Activated CD4-positive, alpha-beta T cell treated with anti-CD3 and anti-CD28 coated beads for 36 hours (primary cell): ENCODE measurements at regions of chr5 and their contacts with region 1.

Region 1: GRCh38 chr5:109688971-109689739 is 572 bp upstream of the MAN2A1 start:
- DNase-seq: peak; percentile 87
- ATAC-seq: peak; percentile 82
- H3K4me3 Mint-ChIP-seq: peak overlapping the region; percentile 95
- H3K27ac Mint-ChIP-seq: peak overlapping the region; percentile 92
- H3K4me1 Mint-ChIP-seq: peaks cover 36% of the 10 kb centered on the region
- H3K27me3 Mint-ChIP-seq: no peaks in the 10 kb centered on the region

Region 2: GRCh38 chr5:108381954-108382783 is 1307.0 kb before region 1 on chr5 and contains the start of gene FBXL17:
- CTCF ChIA-PET with region 1: no interaction called
- POLR2A ChIA-PET with region 1: no interaction called
- intact Hi-C with region 1: loop called (anchors 1 to 2 kb)
- DNase-seq: peak; percentile 95
- ATAC-seq: peak; percentile 84
- H3K4me3 Mint-ChIP-seq: peak within 1 kb of the TSS; percentile 77
- H3K27ac Mint-ChIP-seq: peak within 1 kb of the TSS; percentile 97
- H3K4me1 Mint-ChIP-seq: peaks cover 33% of the 10 kb centered on the region
- H3K27me3 Mint-ChIP-seq: no peaks in the 10 kb centered on the region
- total RNA-seq, gene FBXL17: 3.1 to 6.6 TPM

Region 3: DNA sequence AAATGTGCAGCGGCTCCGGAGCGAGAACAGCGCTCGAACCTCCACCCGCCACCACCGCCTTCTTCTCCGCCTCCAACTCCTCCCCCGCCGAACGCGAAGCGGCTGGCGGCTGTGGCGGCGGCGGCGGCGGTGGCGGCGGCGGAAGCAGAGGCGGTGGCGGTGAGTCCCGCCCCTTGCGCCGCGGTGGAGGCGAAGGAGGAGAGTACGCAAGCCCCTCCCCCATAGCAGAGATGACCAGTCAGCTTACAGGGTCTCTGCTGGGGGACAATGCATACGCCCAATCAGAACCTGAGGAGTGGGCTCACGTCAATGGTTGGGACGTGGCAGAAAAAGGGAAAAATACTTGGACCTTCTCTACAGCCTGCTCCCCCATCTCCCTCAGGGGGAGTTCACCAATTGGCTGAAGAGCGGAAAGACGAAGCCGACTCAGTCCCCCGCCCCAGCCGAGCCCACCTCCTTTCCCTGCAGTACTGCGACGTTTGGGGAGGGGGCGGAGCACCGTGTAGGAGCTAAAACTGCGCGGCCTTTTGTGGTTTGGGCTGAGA is 279.2 kb before region 1 on chr5 and contains the start of gene PJA2:
- CTCF ChIA-PET with region 1: no interaction called
- POLR2A ChIA-PET with region 1: no interaction called
- intact Hi-C with region 1: loop called (anchors 1 kb)
- DNase-seq: peak; percentile 98
- ATAC-seq: peak; percentile 89
- H3K4me3 Mint-ChIP-seq: peak within 1 kb of the TSS; percentile 99
- H3K27ac Mint-ChIP-seq: peak within 1 kb of the TSS; percentile 99
- H3K4me1 Mint-ChIP-seq: peaks cover 41% of the 10 kb centered on the region
- H3K27me3 Mint-ChIP-seq: no peaks in the 10 kb centered on the region
- total RNA-seq, gene PJA2: 51.8 to 56.4 TPM

Region 4: DNA sequence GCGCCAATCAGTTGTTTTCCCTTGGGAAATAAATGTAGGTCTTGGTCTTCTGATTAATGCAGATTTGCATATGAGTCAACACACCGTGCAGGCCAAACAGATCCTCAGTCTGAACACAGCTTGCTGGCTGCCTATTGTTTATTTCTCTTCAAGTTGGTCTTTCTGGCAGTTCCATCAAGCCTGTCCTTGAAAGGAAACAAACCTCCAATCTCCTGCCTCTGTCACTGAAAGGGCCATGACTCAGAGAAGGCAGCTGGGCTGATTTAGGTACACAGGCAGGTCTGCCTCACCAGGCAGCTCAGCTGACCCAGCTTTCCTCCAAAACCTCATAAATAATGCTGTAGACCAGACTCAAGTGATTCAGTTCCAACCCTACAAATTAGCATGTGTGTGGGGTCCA is 176.5 kb after region 1 on chr5:
- CTCF ChIA-PET with region 1: no interaction called
- POLR2A ChIA-PET with region 1: no interaction called
- intact Hi-C with region 1: loop called in 1 of 2 experiments (anchors 5 kb)
- DNase-seq: peak; percentile 16
- ATAC-seq: peak; percentile 55
- H3K4me3 Mint-ChIP-seq: no peak overlapping the region
- H3K27ac Mint-ChIP-seq: peak overlapping the region; percentile 33
- H3K4me1 Mint-ChIP-seq: peaks cover 54% of the 10 kb centered on the region
- H3K27me3 Mint-ChIP-seq: no peaks in the 10 kb centered on the region

Region 5: DNA sequence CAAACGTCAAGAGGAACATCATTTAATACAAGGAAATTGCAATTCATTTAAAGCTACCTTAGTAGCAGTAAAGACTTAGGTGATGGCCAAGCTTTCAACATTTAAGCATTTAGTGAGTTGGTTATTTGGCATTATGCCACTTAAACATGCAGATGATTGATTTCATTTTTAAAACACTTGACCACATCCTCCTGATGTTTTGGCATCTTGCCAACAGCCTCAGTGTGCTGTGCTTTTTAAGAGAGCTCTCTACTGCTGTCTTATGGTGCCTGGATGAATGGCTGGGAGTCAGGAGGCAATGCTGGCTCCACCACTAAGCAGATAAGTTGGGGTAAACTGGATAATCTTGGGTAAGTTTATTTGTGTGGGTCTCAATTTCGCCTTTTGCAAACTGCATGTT is 365.1 kb after region 1 on chr5:
- CTCF ChIA-PET with region 1: interaction called, 5 read pairs
- POLR2A ChIA-PET with region 1: no interaction called
- intact Hi-C with region 1: loop called (anchors 1 to 2 kb)
- DNase-seq: peak; percentile 84
- ATAC-seq: peak; percentile 94
- H3K4me3 Mint-ChIP-seq: no peak overlapping the region
- H3K27ac Mint-ChIP-seq: peak overlapping the region; percentile 76
- H3K4me1 Mint-ChIP-seq: peaks cover 28% of the 10 kb centered on the region
- H3K27me3 Mint-ChIP-seq: no peaks in the 10 kb centered on the region

Region 6: GRCh38 chr5:110625376-110625999 is 936.3 kb after region 1 on chr5:
- CTCF ChIA-PET with region 1: no interaction called
- POLR2A ChIA-PET with region 1: no interaction called
- intact Hi-C with region 1: loop called (anchors 1 to 10 kb)
- DNase-seq: no peak
- ATAC-seq: no peak
- H3K4me3 Mint-ChIP-seq: no peak overlapping the region
- H3K27ac Mint-ChIP-seq: no peak overlapping the region
- H3K4me1 Mint-ChIP-seq: no peaks in the 10 kb centered on the region
- H3K27me3 Mint-ChIP-seq: no peaks in the 10 kb centered on the region

Region 7: DNA sequence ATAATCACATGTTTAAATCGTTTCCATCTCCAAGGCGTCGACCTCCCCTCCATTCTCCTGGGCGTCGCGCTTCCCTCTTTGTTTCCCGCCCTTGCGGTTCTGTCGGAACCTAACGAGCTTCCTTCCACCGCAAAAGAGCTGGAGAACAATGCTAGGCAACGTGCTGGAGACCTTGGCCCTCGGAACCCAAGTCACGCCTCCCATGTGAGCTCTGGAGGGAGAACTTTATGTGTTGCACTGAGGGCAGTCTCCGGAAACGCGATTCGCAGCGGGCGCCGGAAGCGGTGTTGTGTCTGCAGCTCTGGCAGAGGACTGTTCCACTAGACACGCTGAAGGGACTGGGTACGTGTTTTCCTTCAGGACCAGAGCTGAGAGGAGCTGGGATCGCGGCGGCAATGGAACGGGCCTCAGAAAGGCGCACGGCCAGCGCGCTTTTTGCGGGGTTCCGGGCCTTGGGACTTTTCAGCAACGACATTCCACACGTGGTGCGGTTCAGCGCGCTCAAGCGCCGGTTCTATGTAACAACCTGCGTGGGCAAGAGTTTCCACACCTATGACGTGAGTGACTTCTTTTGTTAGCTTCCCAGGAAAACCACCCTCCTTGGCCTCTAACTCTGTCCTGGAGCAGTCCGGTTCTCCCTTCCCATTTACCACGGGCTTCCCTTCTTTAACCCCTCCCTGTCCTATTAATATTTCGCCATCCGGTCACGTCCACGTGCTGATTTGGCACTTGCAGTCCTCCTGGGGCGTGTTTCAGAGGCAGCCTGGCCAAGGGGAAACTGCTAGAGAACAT is 1403.1 kb after region 1 on chr5 and contains the start of gene WDR36:
- CTCF ChIA-PET with region 1: no interaction called
- POLR2A ChIA-PET with region 1: no interaction called
- intact Hi-C with region 1: loop called in 1 of 2 experiments (anchors 10 kb)
- DNase-seq: peak; percentile 93
- ATAC-seq: peak; percentile 91
- H3K4me3 Mint-ChIP-seq: peak within 1 kb of the TSS; percentile 92
- H3K27ac Mint-ChIP-seq: peak within 1 kb of the TSS; percentile 96
- H3K4me1 Mint-ChIP-seq: peaks cover 31% of the 10 kb centered on the region
- H3K27me3 Mint-ChIP-seq: peaks cover 4% of the 10 kb centered on the region
- total RNA-seq, gene WDR36: 58.6 to 61.7 TPM